Activated CD4-positive, alpha-beta T cell treated with anti-CD3 and anti-CD28 coated beads, Interleukin-2, amount 10 ng/mL, durations not matched to agents 24 days and 14 days (primary cell): ENCODE measurements at regions of chr5 and their contacts with region 1.

Region 1: DNA sequence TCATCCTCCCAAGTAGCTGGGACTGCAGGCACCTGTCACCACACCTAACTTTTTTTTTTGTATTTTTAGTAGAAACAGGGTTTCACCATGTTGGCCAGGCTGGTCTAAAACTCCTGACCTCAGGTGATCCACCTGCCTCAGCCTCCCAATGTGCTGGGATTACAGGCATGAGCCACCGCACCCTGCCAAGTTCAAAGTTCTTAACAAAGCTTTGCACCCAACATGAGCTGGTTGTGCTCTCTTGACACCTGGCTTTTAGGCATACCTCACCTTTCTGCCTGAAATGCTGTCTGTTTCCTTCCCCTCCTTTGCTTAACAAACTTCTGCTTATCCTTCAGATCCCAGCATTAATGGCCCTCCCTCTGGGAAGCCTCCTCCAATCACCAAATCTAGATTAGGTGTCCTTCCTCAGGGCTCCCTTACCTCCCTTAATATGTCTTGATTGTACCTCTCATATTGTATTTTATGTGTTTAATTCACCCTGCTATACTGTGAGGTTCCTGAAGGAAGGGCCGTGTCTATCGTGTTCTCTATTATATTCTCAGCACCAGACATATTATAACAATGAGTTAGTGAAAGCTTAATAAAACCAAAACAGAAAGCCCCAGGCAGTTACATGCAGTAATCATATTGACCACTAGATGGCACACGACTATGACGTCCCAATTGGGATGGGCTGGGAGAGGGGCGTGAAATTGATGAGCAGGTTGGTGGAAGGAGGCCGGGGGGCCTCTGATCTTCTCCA is 62.9 kb upstream of the PPARGC1B start:
- DNase-seq: peak; percentile 80
- H3K4me3 Mint-ChIP-seq: no peak overlapping the region
- H3K27ac Mint-ChIP-seq: no peak overlapping the region
- H3K4me1 Mint-ChIP-seq: peaks cover 3% of the 10 kb centered on the region
- H3K27me3 Mint-ChIP-seq: no peaks in the 10 kb centered on the region

Region 2: GRCh38 chr5:149113669-149114068 is 553.6 kb before region 1 on chr5:
- intact Hi-C with region 1: no loop called
- DNase-seq: no peak
- H3K4me3 Mint-ChIP-seq: no peak overlapping the region
- H3K27ac Mint-ChIP-seq: no peak overlapping the region
- H3K4me1 Mint-ChIP-seq: peaks cover 8% of the 10 kb centered on the region
- H3K27me3 Mint-ChIP-seq: peaks cover 17% of the 10 kb centered on the region

Region 3: GRCh38 chr5:149828161-149828884 is 161.1 kb after region 1 on chr5:
- intact Hi-C with region 1: loop called (anchors 1 kb)
- DNase-seq: peak; percentile 94
- H3K4me3 Mint-ChIP-seq: no peak overlapping the region
- H3K27ac Mint-ChIP-seq: peak overlapping the region; percentile 16
- H3K4me1 Mint-ChIP-seq: peaks cover 12% of the 10 kb centered on the region
- H3K27me3 Mint-ChIP-seq: no peaks in the 10 kb centered on the region